Breast epithelium (tissue), 4 donors: ENCODE measurements at regions of chr11 and their contacts with region 1.

Region 1: DNA sequence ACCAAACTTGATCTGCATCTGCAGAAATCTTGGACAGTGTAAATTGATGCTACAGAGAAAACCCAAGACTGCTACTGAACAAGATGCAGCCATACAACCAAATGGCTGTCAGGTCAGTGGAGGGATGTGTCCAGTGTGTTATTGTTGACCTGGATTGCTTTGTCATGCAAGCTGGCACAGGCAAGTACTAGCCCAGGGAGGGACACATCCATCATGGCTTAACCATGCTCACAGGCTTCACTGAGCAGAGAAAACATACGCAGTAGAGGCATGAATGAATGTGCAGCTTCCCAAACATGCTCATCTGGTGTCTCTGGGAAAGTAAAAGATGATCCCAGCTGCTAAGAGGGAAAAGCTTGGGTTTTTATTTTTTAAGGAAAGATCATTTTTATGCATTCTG is 93.6 kb downstream of the MTNR1B start:
- DNase-seq: no peak
- H3K4me3 ChIP-seq: no peak overlapping the region
- H3K27ac ChIP-seq: no peak overlapping the region
- H3K4me1 ChIP-seq: no peaks in the 10 kb centered on the region
- H3K27me3 ChIP-seq: no peaks in the 10 kb centered on the region
- CTCF ChIP-seq: no peak
- POLR2A ChIP-seq: no peak

Region 2: GRCh38 chr11:93020248-93021046 is 42.7 kb before region 1 on chr11:
- intact Hi-C with region 1: loop called (anchors 2 kb)
- DNase-seq: no peak
- H3K4me3 ChIP-seq: no peak overlapping the region
- H3K27ac ChIP-seq: peak overlapping the region in 1 of 2 donors; percentile 19
- H3K4me1 ChIP-seq: no peaks in the 10 kb centered on the region
- H3K27me3 ChIP-seq: no peaks in the 10 kb centered on the region
- CTCF ChIP-seq: no peak
- POLR2A ChIP-seq: no peak